ENCODE measurements at regions of chr9 and their contacts with region 1.

Region 1: GRCh38 chr9:115524453-115525059 is 406.6 kb upstream of the TNC start:
- DNase-seq: no peak

Region 2: DNA sequence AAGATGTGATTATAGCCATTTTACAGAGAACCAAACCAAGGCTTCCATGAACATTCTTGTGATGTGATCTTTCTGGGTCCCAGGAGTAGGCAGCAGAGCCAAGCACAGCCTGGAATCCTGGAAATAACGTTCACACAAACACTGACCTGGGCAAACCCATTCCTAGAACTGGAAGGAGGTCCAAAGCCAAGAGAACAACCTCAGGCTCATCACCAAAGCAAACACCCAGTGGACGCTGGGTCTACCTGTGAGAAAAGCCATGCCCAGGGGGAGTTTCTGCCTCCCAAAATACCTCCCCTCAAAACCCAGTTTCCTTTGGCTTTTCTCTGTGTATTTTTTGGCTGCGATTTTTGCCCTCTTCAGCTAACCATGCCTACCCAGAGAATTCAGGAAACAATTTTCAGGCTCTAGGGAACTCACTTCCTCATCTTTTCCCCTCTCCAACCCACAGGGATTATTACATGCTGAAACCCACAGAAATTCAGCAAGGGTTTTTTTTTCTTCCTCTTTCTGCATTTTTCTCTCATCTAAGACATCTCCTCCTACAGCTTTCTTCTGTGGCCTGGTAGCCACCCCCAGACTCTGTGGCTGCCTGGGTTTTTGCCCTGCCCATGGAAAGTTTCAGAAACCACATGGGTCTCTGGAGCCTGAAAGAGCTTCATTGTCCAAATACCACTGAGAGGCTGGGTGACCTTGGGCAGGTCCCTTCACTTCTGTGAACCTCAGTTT is 481.6 kb before region 1 on chr9:
- intact Hi-C with region 1: loop called in 1 of 2 experiments (anchors 10 kb)
- DNase-seq: no peak

Region 3: GRCh38 chr9:115099901-115100300 is 424.7 kb before region 1 on chr9:
- intact Hi-C with region 1: loop called in 1 of 2 experiments (anchors 10 kb)
- DNase-seq: no peak

Region 4: DNA sequence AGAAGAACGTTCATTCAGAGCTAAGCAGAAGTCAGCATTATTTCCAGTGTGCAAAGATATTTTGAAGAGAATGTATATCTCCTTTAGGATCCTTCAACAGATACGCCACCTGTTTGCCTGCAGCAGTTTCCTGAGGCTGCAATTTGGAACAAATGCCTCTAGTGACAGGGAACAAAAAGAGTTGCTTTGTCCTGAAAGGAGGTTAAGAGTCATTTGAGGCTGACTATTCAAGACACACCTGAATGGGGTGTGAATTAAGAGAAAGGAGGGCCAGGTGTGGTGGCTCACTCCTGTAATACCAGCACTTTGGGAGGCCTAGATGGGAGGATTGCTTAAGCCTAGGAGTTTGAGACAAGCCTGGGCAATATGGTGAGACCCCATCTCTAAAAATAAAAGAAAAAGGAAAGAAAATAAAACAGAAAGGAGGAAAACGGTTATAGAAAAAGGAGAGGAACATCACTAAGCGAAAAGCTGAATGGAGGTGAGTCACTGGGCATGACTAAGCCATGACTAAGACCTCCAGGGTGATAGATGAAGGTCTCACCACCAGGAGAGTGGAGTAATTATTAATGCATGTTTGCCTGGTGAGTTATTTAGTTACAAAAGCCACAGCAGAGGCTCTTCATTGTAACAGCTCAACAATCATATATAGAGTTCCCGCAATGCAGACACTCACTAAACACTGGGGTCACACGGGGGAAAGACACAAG is 151.4 kb before region 1 on chr9:
- intact Hi-C with region 1: loop called in 1 of 2 experiments (anchors 10 kb)
- DNase-seq: no peak

Region 5: GRCh38 chr9:116232425-116233159 is 708.0 kb after region 1 on chr9:
- intact Hi-C with region 1: no loop called
- DNase-seq: no peak

Measured in posterior vena cava (tissue), 2 donors.